PC-3 (cell line): ENCODE measurements at regions of chr15 and their contacts with region 1.

Region 1: GRCh38 chr15:47987908-47988532 is 132.8 kb upstream of the SLC24A5 start:
- DNase-seq: peak; percentile 60
- ATAC-seq: peak; percentile 90
- H3K4me3 ChIP-seq: no peak overlapping the region
- H3K27ac ChIP-seq: no peak overlapping the region
- H3K4me1 ChIP-seq: no peaks in the 10 kb centered on the region
- H3K27me3 ChIP-seq: no peaks in the 10 kb centered on the region
- CTCF ChIP-seq: peak; percentile 70

Region 2: GRCh38 chr15:47473832-47474231 is 514.2 kb before region 1 on chr15:
- CTCF ChIA-PET with region 1: interaction called, 5 read pairs
- POLR2A ChIA-PET with region 1: no interaction called
- intact Hi-C with region 1: loop called (anchors 10 kb)
- DNase-seq: no peak
- ATAC-seq: no peak
- H3K4me3 ChIP-seq: no peak overlapping the region
- H3K27ac ChIP-seq: no peak overlapping the region
- H3K4me1 ChIP-seq: peaks cover 3% of the 10 kb centered on the region; the same call in 1 of the 2 replicates
- H3K27me3 ChIP-seq: no peaks in the 10 kb centered on the region
- CTCF ChIP-seq: no peak

Region 3: GRCh38 chr15:47504624-47505256 is 483.3 kb before region 1 on chr15:
- CTCF ChIA-PET with region 1: interaction called, 3 read pairs
- POLR2A ChIA-PET with region 1: no interaction called
- intact Hi-C with region 1: loop called (anchors 1 kb)
- DNase-seq: no peak
- ATAC-seq: no peak
- H3K4me3 ChIP-seq: no peak overlapping the region
- H3K27ac ChIP-seq: no peak overlapping the region
- H3K4me1 ChIP-seq: no peaks in the 10 kb centered on the region
- H3K27me3 ChIP-seq: no peaks in the 10 kb centered on the region
- CTCF ChIP-seq: no peak

Region 4: DNA sequence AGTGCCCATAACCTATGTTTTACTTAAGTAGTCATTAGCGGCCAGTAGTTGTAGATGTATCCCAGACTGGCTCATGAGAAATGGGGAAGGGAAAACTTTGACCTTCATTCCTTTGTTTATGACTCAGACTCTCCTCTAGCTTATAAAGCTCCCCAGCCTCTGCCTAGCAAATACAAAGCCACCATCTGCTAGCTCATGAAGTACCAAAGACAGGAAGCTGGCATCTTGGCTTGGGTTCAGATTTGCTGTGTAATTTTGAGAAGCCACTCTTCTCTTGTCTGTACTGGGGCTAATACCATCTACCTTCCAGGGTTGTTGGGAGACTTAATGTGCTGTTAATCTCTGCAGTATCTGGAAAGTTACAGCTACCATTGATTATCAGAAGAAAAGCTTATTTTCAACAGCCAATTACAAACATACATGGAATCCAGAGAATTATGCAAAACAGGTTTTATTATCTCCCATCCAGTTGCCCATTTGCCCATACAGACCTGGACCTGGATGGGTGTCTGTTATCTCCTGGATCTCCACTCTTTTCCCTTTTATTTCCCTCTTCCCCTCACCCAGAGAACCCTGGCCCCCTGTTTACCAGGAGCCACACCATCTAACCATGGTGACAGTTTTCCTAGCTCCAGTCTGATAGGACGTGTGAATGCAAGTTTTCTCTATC is 116.9 kb before region 1 on chr15:
- CTCF ChIA-PET with region 1: no interaction called
- POLR2A ChIA-PET with region 1: no interaction called
- intact Hi-C with region 1: no loop called
- DNase-seq: peak; percentile 88
- ATAC-seq: peak; percentile 96
- H3K4me3 ChIP-seq: no peak overlapping the region; the same call in 1 of the 2 replicates
- H3K27ac ChIP-seq: peak overlapping the region; percentile 93
- H3K4me1 ChIP-seq: peaks cover 19% of the 10 kb centered on the region
- H3K27me3 ChIP-seq: no peaks in the 10 kb centered on the region
- CTCF ChIP-seq: no peak

Region 5: GRCh38 chr15:48084759-48085590 is 97.0 kb after region 1 on chr15:
- CTCF ChIA-PET with region 1: no interaction called
- POLR2A ChIA-PET with region 1: no interaction called
- intact Hi-C with region 1: loop called (anchors 1 kb)
- DNase-seq: peak; percentile 37
- ATAC-seq: peak; percentile 63
- H3K4me3 ChIP-seq: no peak overlapping the region
- H3K27ac ChIP-seq: no peak overlapping the region
- H3K4me1 ChIP-seq: no peaks in the 10 kb centered on the region
- H3K27me3 ChIP-seq: peaks cover 17% of the 10 kb centered on the region
- CTCF ChIP-seq: peak; percentile 60

Region 6: DNA sequence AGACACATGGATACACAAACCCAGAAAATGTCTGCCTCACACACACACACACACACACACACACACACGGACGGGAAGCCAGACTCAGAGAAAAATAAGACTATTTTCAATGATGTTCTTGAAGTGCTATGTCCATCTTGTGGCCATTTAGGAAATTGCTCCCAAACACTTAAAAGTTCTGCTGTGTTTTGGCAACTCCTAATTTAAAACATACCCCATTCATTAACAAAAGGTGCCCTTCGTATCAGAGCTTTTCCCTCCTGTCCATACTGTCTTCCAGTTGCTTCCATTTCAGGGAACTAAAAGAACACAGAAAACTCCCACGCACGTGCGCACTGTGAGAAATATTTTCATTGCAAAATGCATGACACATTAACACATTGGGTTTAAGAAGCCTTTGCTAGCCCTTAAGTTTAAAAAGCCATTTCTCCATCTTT is 262.6 kb after region 1 on chr15:
- CTCF ChIA-PET with region 1: no interaction called
- POLR2A ChIA-PET with region 1: no interaction called
- intact Hi-C with region 1: loop called (anchors 2 kb)
- DNase-seq: peak; percentile 60
- ATAC-seq: no peak; the same call in 1 of the 2 replicates
- H3K4me3 ChIP-seq: no peak overlapping the region
- H3K27ac ChIP-seq: no peak overlapping the region
- H3K4me1 ChIP-seq: no peaks in the 10 kb centered on the region
- H3K27me3 ChIP-seq: no peaks in the 10 kb centered on the region
- CTCF ChIP-seq: peak; percentile 66